ENCODE measurements at regions of chr1 and their contacts with region 1.

Region 1: DNA sequence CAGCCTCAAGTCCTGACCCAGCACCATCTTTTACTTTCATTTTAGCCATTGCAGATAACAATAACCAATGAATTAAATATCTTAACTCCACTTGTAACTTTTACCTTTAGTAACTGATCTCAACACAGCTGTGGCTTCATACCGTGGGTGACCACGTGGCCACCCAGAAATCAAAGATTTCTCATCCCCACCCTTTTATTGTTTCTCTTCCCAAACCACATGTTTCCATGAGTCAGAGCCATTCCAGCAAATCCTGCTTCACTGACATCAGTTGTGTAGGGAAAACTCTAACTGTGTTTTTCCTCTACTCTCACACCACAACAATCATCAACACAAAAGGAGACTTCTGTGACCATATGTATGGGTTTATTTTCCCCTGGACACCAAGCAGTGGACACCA is 25.1 kb upstream of the BRDT start:
- DNase-seq: no peak
- H3K4me3 Mint-ChIP-seq: no peak overlapping the region
- H3K27ac Mint-ChIP-seq: peak overlapping the region; percentile 3
- H3K4me1 Mint-ChIP-seq: peaks cover 19% of the 10 kb centered on the region
- H3K27me3 Mint-ChIP-seq: peaks cover 11% of the 10 kb centered on the region

Region 2: GRCh38 chr1:91440845-91441244 is 483.3 kb before region 1 on chr1:
- intact Hi-C with region 1: loop called (anchors 1 kb)
- DNase-seq: no peak
- H3K4me3 Mint-ChIP-seq: no peak overlapping the region
- H3K27ac Mint-ChIP-seq: no peak overlapping the region
- H3K4me1 Mint-ChIP-seq: no peaks in the 10 kb centered on the region
- H3K27me3 Mint-ChIP-seq: peaks cover 8% of the 10 kb centered on the region

Region 3: DNA sequence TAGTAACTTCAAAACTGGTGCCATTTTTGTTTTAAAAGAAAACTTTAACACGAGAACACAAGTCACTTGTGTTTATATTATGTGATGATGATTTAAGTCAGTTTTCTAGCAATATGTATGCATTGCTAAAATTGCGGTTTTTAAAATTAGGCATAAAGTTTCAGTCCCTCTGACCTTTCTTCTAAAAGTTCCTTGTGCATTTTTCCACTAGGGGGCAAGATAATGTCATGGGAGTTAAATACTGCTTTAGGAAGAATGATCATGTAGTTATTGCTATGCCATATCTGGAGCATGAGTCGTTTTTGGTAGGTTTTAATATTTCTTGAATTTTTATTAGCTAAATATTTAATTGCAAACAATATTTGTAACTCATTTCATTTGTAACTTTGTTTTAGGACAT is 412.8 kb before region 1 on chr1:
- intact Hi-C with region 1: loop called (anchors 1 kb)
- DNase-seq: no peak
- H3K4me3 Mint-ChIP-seq: no peak overlapping the region
- H3K27ac Mint-ChIP-seq: no peak overlapping the region
- H3K4me1 Mint-ChIP-seq: peaks cover 25% of the 10 kb centered on the region
- H3K27me3 Mint-ChIP-seq: no peaks in the 10 kb centered on the region

Region 4: DNA sequence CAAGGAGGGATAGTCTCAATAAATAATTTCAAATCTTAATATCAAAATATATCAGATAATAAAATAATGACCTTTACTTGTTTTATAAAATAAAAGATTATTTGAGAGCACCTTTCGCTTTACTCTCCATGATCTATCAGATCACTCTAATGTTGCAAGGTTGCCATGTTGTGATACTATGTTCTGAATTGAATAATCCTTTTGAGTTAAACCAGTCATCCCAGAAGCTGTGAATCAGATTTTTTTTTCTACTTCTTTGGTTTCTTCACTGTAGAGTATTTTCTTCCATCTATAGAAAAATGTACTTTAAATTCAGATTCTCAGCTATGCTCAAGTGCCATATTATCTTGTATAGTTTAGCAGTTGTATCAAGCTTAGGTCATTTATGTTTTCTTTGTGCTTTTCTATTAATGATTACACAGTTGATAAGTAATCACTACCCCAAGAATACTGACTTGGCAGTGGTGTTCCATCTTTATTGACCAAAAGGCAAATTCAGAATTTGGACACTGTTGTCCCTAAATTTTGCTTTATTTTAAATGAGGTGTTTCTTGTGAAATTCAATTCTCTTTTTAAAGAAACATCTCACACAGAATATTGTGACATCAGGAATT is 58.0 kb after region 1 on chr1:
- intact Hi-C with region 1: no loop called
- DNase-seq: no peak
- H3K4me3 Mint-ChIP-seq: no peak overlapping the region
- H3K27ac Mint-ChIP-seq: no peak overlapping the region
- H3K4me1 Mint-ChIP-seq: no peaks in the 10 kb centered on the region
- H3K27me3 Mint-ChIP-seq: peaks cover 10% of the 10 kb centered on the region

Region 5: DNA sequence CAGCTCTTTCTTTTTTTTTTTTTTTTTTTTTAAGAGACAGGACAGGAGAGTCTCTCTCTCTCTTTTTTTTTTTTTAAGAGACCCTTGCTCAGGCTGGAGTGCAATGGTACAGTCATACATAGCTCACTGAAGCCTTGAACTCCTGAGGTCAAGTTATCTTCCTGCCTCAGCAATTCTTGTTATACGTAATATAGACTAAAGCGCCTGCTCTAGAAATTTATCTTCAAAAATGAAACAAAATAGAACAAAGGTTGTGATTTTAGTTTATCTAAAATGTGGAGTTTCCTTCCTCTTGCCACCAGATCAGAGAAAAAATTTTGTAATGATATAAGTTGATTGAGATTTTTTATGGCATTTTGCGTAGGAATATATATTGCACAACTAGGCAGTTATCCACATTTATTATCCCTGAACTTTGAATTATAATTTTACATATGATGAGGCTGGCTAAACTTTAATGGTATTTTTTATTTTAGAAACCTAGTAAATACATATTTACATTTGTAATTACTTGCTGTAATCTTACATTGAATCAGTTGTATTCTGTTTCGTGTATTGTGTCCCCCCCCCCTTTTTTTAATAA is 1199.1 kb after region 1 on chr1:
- intact Hi-C with region 1: no loop called
- DNase-seq: no peak
- H3K4me3 Mint-ChIP-seq: no peak overlapping the region
- H3K27ac Mint-ChIP-seq: no peak overlapping the region
- H3K4me1 Mint-ChIP-seq: no peaks in the 10 kb centered on the region
- H3K27me3 Mint-ChIP-seq: no peaks in the 10 kb centered on the region